Panc1 (cell line): ENCODE measurements at regions of chr12 and their contacts with region 1.

Region 1: DNA sequence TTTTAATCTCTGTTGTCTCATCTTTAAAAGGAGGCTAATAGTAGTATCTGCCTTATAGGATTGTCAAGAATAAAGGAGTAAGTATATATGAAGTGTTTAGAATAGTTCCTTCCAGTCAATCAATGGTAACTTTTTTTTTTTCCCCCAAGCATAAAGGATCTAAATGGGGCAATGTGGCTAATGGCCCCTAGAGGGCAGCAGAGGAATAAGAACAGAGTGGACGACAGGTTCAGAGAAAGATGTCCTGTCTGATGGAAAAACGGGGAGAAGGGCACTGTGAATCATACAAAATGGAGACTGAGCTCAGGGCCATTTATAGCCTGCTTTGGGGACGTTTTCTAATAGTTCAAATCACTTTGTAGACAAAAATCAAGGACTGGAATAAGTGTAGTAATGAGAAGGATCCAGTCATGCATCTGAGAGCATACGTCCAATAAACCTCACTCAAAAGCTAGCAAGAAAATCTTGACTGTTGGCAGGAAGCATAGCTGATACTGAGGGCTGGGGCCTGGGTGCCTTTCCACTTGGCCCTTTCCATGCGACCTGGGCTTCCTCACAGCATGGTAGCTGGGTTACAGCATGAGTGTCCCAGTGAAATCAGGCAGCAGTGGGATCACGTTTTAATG is 51.3 kb downstream of the IFNG-AS1 start:
- DNase-seq: peak; percentile 35
- ATAC-seq: peak; percentile 93
- H3K4me3 ChIP-seq: no peak overlapping the region
- H3K27ac ChIP-seq: no peak overlapping the region
- H3K4me1 ChIP-seq: no peaks in the 10 kb centered on the region; the same call in 1 of the 2 replicates
- H3K27me3 ChIP-seq: no peaks in the 10 kb centered on the region
- CTCF ChIP-seq: peak; percentile 92

Region 2: GRCh38 chr12:67648521-67649260 is 391.9 kb before region 1 on chr12 and contains the start of gene DYRK2:
- CTCF ChIA-PET with region 1: no interaction called
- POLR2A ChIA-PET with region 1: no interaction called
- in situ Hi-C with region 1: no loop called
- intact Hi-C with region 1: no loop called
- DNase-seq: no peak
- ATAC-seq: peak; percentile 81
- H3K4me3 ChIP-seq: peak within 1 kb of the TSS; percentile 84 to 85
- H3K27ac ChIP-seq: peak within 1 kb of the TSS; percentile 75
- H3K4me1 ChIP-seq: peaks cover 23% of the 10 kb centered on the region
- H3K27me3 ChIP-seq: no peaks in the 10 kb centered on the region
- CTCF ChIP-seq: 0 out of 2 replicates have a peak, but pooled peaks have one; percentile 7
- total RNA-seq, gene DYRK2: 9.9 TPM

Region 3: GRCh38 chr12:68223083-68223747 is 182.7 kb after region 1 on chr12:
- CTCF ChIA-PET with region 1: no interaction called
- POLR2A ChIA-PET with region 1: no interaction called
- in situ Hi-C with region 1: no loop called
- intact Hi-C with region 1: loop called (anchors 2 kb)
- DNase-seq: peak; percentile 58
- ATAC-seq: peak; percentile 99
- H3K4me3 ChIP-seq: peak overlapping the region in 1 of 2 experiments; percentile 23; a peak in 2 of 4 replicates
- H3K27ac ChIP-seq: peak overlapping the region; percentile 51
- H3K4me1 ChIP-seq: peaks cover 24% of the 10 kb centered on the region
- H3K27me3 ChIP-seq: peaks cover 6% of the 10 kb centered on the region
- CTCF ChIP-seq: peak; percentile 90

Region 4: GRCh38 chr12:68259318-68259940 is 218.9 kb after region 1 on chr12:
- CTCF ChIA-PET with region 1: no interaction called
- POLR2A ChIA-PET with region 1: no interaction called
- in situ Hi-C with region 1: no loop called
- intact Hi-C with region 1: no loop called
- DNase-seq: peak; percentile 43
- ATAC-seq: peak; percentile 48; the same call in 1 of the 2 replicates
- H3K4me3 ChIP-seq: no peak overlapping the region
- H3K27ac ChIP-seq: no peak overlapping the region
- H3K4me1 ChIP-seq: no peaks in the 10 kb centered on the region
- H3K27me3 ChIP-seq: no peaks in the 10 kb centered on the region
- CTCF ChIP-seq: no peak